ENCODE measurements at regions of chr11 and their contacts with region 1.

Region 1: DNA sequence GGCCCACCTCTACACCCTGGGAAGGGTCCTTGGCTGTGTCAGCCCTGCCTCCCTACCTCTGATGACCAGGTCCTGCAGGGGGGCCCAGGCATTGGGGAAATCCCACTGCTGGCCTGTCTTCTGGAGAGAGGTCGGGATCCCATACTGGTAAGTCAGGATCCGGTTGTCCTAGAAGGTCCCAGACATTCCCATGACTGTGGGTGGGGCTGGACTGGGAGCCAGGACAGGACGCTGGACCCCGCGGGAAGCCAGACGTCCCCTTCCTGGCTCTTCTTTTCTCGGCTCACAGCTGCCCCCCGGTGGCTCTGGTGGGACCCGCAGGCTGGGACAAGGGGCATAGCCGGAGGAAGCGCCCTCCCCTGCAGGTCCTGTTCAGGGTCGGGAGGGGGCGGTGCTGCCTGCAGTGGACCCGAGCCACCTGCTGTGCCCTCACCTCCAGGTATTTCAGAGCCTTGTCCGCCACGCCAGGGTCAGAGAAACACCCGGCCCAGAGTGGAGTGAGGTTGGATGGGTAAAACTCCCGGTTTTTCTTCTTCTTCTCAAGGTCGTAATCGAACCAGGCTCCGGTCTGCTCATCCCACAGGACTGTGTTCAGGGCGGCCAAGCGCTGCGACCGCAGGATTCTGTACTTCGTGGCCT is 20.0 kb downstream of the TREH start:
- DNase-seq: peak; percentile 83 to 91 (median 88)
- H3K4me3 ChIP-seq: peak overlapping the region in 13 of 59 donors; percentile 1 to 22 (median 13)
- H3K27ac ChIP-seq: peak overlapping the region in 55 of 59 donors; percentile 5 to 85 (median 72)
- H3K27me3 ChIP-seq: no peaks in the 10 kb centered on the region
- CTCF ChIP-seq: peak; percentile 75 to 99 (median 97)

Region 2: DNA sequence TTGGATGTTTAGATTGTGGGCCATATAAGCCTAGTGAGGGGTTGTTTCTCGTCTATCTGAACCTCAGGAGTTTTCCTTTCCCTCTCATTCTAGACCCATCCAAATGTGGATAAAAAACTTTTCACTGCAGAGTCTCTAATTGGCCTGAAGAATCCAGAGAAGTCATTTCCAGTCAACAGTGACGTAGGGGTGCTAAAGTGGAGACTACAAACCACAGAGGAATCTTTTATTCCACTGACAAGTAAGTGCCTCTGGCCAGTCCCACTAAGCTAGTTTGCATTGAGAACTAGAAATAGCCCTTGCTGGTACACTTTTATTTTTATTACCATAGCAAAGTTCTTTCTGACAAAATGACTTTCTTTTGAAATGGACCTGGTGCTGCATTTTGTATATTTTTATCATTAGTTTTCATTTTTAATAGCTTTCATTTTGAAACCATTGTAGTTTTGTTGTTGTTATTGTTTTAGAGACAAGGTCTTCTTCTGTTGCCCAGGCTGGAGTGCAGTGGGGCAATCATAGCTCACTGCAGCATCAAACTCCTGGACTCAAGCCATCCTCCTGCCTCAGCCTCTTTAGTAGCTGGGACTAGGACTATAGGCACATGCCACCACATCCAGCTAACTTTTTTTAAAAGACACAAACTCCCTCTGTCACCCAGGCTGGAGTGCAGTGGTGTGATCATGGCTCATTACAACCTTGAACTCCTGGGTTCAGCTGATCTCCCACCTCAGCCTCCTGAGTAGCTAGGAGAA is 66.6 kb before region 1 on chr11:
- intact Hi-C with region 1: loop called in 1 of 2 experiments (anchors 2 kb)
- DNase-seq: peak in 2 of 10 donors; percentile 53 to 56
- H3K4me3 ChIP-seq: peak overlapping the region in 1 of 59 donors; percentile 3
- H3K27ac ChIP-seq: peak overlapping the region in 57 of 59 donors; percentile 3 to 91 (median 77)
- H3K27me3 ChIP-seq: no peaks in the 10 kb centered on the region
- CTCF ChIP-seq: no peak

Region 3: DNA sequence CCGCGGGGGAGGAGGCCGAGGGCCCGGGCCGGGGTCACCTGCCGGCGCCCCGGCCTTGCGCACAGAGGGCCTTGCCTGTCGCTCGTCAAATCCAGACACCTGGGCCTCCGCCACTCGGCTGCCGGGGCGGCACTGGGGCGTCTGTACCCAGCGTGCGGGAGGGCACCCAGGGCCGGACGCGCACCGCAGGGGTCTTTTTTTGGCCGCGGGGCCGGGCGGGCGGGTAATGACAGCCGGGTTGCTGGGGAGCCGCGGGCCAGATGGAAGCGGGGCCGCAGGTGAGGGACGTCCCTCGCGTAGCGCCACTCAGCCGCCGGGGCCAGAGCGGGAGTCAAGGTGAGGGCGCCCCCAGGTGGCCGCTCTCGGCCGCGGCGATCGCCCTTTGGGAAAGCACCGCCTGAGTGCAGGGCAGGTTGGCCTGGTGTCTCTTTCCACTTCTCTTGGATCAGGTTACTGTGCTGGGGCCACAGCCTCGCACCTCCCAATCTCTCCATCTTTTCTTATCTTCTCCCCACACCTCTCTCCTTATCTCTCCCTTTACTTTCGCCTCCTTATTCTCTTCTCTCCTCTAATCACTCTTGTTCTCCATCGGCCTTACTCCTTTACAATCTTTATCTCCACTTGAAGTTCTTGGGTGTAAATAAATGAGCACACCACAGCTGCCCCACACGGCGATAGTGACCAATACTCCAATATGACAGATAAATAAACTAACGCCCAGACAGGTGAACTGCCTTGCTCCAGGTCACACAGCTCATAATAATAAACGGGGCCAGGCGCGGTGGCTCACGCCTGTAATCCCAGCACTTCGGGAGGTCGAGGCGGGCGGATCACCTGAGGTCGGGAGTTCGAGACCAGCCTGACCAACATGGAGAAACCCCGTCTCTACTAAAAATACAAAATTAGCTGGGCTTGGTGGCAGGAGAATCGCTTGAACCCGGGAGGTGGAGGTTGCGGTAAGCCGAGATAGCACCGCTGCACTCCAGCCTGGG is 48.3 kb before region 1 on chr11:
- intact Hi-C with region 1: loop called in 1 of 2 experiments (anchors 5 kb)
- DNase-seq: peak; percentile 69 to 86 (median 78)
- H3K4me3 ChIP-seq: peak overlapping the region; percentile 42 to 91 (median 63)
- H3K27ac ChIP-seq: peak overlapping the region; percentile 84 to 99 (median 97)
- H3K27me3 ChIP-seq: no peaks in the 10 kb centered on the region
- CTCF ChIP-seq: peak; percentile 77 to 97 (median 89)

Region 4: GRCh38 chr11:118634431-118635236 is 24.8 kb before region 1 on chr11:
- intact Hi-C with region 1: loop called in 1 of 2 experiments (anchors 1 kb)
- DNase-seq: peak in 2 of 10 donors; percentile 67 to 85
- H3K4me3 ChIP-seq: peak overlapping the region in 23 of 59 donors; percentile 2 to 36 (median 18)
- H3K27ac ChIP-seq: peak overlapping the region; percentile 2 to 91 (median 81)
- H3K27me3 ChIP-seq: no peaks in the 10 kb centered on the region
- CTCF ChIP-seq: peak in 32 of 56 donors; percentile 5 to 52 (median 28)

Measured in dorsolateral prefrontal cortex (tissue), 120 donors.